Cardiac septum (tissue), 1 donor: ENCODE measurements at regions of chr6 and their contacts with region 1.

Region 1: GRCh38 chr6:134882426-134883038 is 67.4 kb downstream of the ALDH8A1 start:
- DNase-seq: no peak

Region 2: DNA sequence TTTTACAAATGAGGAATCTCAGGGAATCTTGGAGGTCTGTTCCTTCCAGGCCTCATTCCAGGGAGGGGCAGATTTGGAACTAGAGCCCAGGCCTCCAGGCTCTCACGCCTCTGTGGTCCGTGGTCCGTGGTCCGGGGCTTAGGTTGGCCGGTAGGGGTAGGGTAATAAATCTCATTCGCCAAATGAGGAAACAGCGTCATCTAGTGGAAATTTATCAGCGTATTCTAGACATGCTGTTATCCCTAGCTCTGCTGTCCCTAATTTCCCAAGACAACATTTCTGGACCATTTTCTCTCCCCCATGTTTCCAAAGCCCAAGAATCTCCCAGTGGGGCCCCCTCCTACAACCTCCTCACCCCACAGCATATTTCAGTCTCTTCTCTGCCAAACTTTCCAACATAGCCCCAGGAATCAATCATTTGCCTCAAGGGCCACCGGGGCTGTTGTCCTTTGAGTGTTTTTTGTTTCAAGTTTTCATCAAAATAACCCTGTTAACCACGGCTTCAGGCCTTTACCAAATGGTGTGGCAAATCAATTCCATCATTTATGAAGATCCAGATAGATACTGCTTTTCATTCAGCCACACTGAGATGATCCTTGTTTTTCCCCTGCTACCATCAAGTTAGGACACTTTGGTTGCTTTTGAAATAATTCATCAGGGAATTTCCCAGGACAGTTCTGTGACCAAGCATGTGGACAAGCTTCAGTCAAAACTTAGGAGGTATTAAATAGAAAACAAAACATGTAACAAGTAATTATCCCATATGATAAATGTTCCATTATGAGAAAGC is 59.4 kb before region 1 on chr6:
- intact Hi-C with region 1: loop called (anchors 5 kb)
- DNase-seq: no peak

Region 3: DNA sequence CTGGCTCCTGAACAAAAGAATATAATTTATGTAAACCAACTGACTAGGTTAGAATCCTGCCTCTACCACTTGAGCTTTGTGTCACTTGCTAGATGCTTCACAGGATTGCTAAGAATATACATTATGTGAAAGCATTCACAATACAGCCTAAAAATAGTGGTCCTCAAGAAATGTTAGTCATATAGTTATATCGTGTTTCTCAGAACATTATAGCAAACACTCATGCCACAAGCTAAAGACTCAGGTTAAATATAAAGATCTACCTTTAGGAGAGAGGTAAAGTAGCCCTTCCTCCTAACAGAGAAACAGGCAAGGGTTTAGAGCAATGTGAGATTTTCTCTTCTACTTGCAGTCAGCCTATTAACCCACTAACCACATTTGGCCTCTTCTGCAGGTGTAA is 85.2 kb after region 1 on chr6:
- intact Hi-C with region 1: no loop called
- DNase-seq: no peak